Colonic mucosa (tissue), 4 donors: ENCODE measurements at regions of chr2 and their contacts with region 1.

Region 1: GRCh38 chr2:176126929-176127773 is 2.4 kb upstream of the HOXD8 start:
- DNase-seq: peak; percentile 78
- H3K4me3 ChIP-seq: no peak overlapping the region
- H3K27ac ChIP-seq: no peak overlapping the region
- H3K4me1 ChIP-seq: no peaks in the 10 kb centered on the region
- H3K27me3 ChIP-seq: peaks cover 63% of the 10 kb centered on the region
- CTCF ChIP-seq: peak; percentile 89

Region 2: DNA sequence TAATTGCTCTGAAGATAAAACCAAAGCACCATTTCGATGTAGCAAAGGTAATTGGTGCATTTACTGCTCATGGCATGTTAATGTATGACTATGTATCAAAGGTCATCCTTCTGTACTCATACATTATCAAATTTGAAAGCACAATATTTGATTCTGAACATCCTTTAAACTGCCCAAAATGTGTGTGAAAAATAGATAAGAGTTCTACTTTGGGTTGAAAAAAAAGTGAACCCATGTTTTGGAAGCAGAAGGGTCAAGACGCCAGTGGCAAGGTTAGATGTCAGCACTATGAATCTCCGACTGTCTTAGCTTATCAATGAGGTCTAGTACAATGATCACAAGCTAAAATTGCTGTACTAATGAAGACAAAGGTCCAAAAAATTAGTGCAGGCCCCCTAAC is 208.2 kb before region 1 on chr2:
- intact Hi-C with region 1: no loop called
- DNase-seq: no peak
- H3K4me3 ChIP-seq: no peak overlapping the region
- H3K27ac ChIP-seq: no peak overlapping the region
- H3K4me1 ChIP-seq: no peaks in the 10 kb centered on the region
- H3K27me3 ChIP-seq: no peaks in the 10 kb centered on the region
- CTCF ChIP-seq: no peak

Region 3: DNA sequence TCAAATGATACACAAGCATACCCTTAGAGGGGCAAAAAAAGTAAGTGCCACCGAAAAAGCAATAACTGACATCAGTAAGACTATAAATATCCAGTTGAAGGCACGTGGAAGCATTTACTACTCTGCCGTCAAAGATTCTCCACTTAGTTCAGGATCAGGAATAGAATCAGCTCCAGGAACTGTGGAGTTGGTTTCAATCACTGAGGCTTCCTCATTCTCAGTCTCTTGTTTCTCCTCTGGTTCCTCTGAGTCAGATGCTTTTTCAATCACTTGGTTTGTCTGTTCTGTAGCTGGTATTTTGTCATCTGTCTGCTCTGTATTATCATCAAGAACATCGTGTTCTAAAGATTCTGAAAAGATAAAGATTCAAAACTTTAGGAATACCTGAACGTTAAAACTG is 197.3 kb before region 1 on chr2:
- intact Hi-C with region 1: no loop called
- DNase-seq: no peak
- H3K4me3 ChIP-seq: no peak overlapping the region
- H3K27ac ChIP-seq: no peak overlapping the region
- H3K4me1 ChIP-seq: no peaks in the 10 kb centered on the region
- H3K27me3 ChIP-seq: no peaks in the 10 kb centered on the region
- CTCF ChIP-seq: no peak

Region 4: DNA sequence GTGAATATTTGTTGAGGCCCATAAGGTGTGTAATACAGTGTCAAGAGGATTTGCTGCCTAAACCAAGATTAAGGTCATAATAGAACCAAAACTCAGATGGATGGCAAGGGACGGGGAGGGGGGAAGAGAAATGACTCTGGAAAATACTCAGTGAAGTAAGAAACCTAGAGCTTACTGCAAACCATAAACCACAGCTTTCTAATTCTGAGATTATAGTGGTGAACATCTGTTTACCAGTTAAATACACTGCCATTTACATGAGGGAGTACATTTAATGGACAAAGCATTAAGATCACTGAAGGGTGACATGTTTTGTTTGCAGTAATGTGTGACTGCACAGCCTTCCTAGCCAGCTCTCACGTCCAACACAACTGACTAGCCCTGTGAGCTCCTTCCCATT is 63.2 kb before region 1 on chr2:
- intact Hi-C with region 1: no loop called
- DNase-seq: no peak
- H3K4me3 ChIP-seq: no peak overlapping the region
- H3K27ac ChIP-seq: no peak overlapping the region
- H3K4me1 ChIP-seq: no peaks in the 10 kb centered on the region
- H3K27me3 ChIP-seq: peaks cover 26% of the 10 kb centered on the region
- CTCF ChIP-seq: no peak

Region 5: GRCh38 chr2:176638167-176639015 is 511.2 kb after region 1 on chr2:
- intact Hi-C with region 1: loop called (anchors 5 kb)
- DNase-seq: peak; percentile 71
- H3K4me3 ChIP-seq: peak overlapping the region; percentile 64
- H3K27ac ChIP-seq: peak overlapping the region; percentile 75
- H3K4me1 ChIP-seq: no peaks in the 10 kb centered on the region
- H3K27me3 ChIP-seq: peaks cover 9% of the 10 kb centered on the region
- CTCF ChIP-seq: peak; percentile 81

Region 6: DNA sequence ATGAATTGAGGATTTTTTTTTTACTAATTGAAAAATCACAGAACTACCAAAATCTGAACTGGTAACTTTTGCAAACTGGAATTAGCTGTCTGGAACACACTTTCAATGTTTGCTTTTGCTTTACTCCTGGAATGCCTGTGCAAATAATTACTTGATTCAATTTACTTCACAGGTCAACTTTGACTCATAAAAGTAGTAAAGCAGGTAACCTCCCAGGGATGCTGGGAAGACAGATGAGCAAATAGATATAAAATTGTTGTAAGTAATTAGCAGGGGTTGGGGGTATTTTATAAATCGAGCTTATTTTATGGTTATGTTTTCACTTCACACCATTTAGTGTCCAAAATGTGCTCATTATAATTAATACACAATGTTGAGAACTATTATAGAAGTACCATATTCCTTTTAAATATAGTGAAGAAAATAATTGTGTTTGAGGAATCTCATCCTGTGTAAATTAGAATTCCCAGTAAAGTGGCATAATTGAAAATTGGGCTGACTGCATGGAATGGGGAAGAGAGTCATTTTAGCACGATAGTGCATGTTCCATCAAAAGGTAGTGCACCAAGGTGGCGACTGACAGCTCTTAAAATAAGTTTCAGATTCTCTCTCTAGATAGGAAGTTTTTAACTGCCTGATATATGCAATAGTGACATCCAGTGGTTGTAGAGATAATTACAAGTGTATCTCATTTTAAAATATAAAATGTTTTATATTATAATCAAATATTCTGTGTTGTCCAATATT is 687.3 kb after region 1 on chr2:
- intact Hi-C with region 1: loop called (anchors 10 kb)
- DNase-seq: no peak
- H3K4me3 ChIP-seq: no peak overlapping the region
- H3K27ac ChIP-seq: no peak overlapping the region
- H3K4me1 ChIP-seq: no peaks in the 10 kb centered on the region
- H3K27me3 ChIP-seq: peaks cover 3% of the 10 kb centered on the region
- CTCF ChIP-seq: peak; percentile 43

Region 7: DNA sequence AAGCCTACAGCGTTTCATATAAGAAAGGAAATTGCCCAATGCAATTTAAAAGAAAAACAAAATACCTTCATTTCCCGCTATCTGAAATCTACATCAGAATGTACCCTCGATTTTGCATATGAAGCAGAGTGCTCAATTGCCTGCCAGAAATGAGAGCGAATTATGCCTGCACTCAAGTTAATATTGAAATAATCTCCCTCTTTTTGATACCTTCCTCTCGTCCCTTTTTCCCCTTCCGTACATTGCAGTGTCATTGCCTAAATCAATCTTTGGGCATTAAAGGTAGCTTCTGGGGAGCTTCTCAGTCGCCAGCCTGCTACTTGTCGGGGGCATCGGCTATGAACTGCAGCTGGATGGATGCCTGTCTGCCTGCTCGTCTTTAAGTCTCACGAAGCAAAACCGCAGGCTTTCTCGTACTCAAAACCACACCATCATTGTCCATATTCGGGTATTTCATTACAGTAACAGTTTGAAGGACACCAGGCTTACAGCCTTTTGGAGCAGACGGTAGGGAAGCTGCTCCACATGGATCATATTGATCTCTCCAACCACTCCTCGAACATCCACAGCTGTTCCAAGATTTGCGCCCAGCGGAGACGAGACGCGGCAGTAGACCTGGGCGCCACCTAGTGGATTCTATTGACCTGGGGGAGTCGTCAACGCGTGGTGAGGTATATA is 1021.5 kb after region 1 on chr2:
- intact Hi-C with region 1: loop called (anchors 10 kb)
- DNase-seq: peak; percentile 87
- H3K4me3 ChIP-seq: peak overlapping the region; percentile 36
- H3K27ac ChIP-seq: no peak overlapping the region
- H3K4me1 ChIP-seq: no peaks in the 10 kb centered on the region
- H3K27me3 ChIP-seq: peaks cover 5% of the 10 kb centered on the region
- CTCF ChIP-seq: peak; percentile 64